CD8-positive, alpha-beta T cell (primary cell): ENCODE measurements at regions of chr2 and their contacts with region 1.

Region 1: GRCh38 chr2:195664528-195664927 is 7.5 kb downstream of the SLC39A10 start:
- DNase-seq: no peak
- ATAC-seq: no peak
- H3K4me3 ChIP-seq: no peak overlapping the region
- H3K4me3 Mint-ChIP-seq: no peak overlapping the region
- H3K27ac ChIP-seq: no peak overlapping the region
- H3K27ac Mint-ChIP-seq: peak overlapping the region; percentile 77
- H3K4me1 ChIP-seq: peaks cover 56% of the 10 kb centered on the region
- H3K4me1 Mint-ChIP-seq: peaks cover 74% of the 10 kb centered on the region
- H3K27me3 ChIP-seq: no peaks in the 10 kb centered on the region
- H3K27me3 Mint-ChIP-seq: no peaks in the 10 kb centered on the region
- CTCF ChIP-seq: peak; percentile 59

Region 2: GRCh38 chr2:195937176-195937575 is 272.6 kb after region 1 on chr2:
- CTCF ChIA-PET with region 1: no interaction called
- POLR2A ChIA-PET with region 1: interaction called, 3 read pairs
- intact Hi-C with region 1: loop called (anchors 5 kb)
- DNase-seq: no peak
- ATAC-seq: no peak
- H3K4me3 ChIP-seq: no peak overlapping the region
- H3K4me3 Mint-ChIP-seq: no peak overlapping the region
- H3K27ac ChIP-seq: no peak overlapping the region
- H3K27ac Mint-ChIP-seq: no peak overlapping the region
- H3K4me1 ChIP-seq: no peaks in the 10 kb centered on the region
- H3K4me1 Mint-ChIP-seq: no peaks in the 10 kb centered on the region
- H3K27me3 ChIP-seq: no peaks in the 10 kb centered on the region
- H3K27me3 Mint-ChIP-seq: no peaks in the 10 kb centered on the region
- CTCF ChIP-seq: no peak

Region 3: DNA sequence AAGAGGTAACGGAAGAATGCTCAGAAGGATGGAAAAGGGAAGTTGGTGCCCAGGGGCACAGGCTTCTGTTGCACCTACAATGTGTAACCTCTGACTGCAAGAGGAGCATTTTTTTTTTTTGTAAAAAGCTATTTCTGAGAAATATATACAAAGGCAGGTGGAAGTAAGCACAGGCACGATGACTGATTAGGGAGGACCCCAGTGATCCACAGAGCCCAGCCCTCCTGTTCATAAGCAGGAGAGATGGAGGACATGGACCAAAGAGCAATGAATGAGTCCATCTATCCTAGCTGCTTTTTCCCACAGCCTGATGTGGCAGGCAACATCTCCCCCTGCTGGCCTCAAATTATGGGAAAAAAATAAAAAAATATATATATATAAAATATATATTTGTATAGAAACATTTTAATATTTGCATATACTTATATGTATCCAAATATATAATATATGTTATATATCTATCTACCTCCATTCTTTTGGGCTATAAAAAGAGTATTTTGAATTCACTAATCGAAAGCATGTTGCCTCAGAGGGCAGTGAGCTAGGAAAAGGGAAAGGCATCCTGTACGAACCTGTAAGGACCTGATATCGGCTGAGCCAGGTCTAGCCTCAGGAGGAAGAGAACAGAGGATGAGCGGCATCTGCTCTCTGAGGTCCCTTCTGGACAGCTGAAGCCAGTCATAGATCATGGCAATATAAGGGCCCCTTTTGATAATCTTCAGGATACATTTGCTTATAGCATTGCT is 672.9 kb after region 1 on chr2:
- CTCF ChIA-PET with region 1: interaction called, 4 read pairs
- POLR2A ChIA-PET with region 1: no interaction called
- intact Hi-C with region 1: loop called (anchors 2 to 5 kb)
- DNase-seq: peak in 4 of 9 experiments; percentile 13 to 58 (median 28)
- ATAC-seq: no peak
- H3K4me3 ChIP-seq: no peak overlapping the region
- H3K4me3 Mint-ChIP-seq: no peak overlapping the region
- H3K27ac ChIP-seq: no peak overlapping the region
- H3K27ac Mint-ChIP-seq: no peak overlapping the region
- H3K4me1 ChIP-seq: no peaks in the 10 kb centered on the region
- H3K4me1 Mint-ChIP-seq: peaks cover 3% of the 10 kb centered on the region
- H3K27me3 ChIP-seq: no peaks in the 10 kb centered on the region
- H3K27me3 Mint-ChIP-seq: peaks cover 3% of the 10 kb centered on the region
- CTCF ChIP-seq: peak; percentile 67